ENCODE measurements at regions of chr19 and their contacts with region 1.

Region 1: DNA sequence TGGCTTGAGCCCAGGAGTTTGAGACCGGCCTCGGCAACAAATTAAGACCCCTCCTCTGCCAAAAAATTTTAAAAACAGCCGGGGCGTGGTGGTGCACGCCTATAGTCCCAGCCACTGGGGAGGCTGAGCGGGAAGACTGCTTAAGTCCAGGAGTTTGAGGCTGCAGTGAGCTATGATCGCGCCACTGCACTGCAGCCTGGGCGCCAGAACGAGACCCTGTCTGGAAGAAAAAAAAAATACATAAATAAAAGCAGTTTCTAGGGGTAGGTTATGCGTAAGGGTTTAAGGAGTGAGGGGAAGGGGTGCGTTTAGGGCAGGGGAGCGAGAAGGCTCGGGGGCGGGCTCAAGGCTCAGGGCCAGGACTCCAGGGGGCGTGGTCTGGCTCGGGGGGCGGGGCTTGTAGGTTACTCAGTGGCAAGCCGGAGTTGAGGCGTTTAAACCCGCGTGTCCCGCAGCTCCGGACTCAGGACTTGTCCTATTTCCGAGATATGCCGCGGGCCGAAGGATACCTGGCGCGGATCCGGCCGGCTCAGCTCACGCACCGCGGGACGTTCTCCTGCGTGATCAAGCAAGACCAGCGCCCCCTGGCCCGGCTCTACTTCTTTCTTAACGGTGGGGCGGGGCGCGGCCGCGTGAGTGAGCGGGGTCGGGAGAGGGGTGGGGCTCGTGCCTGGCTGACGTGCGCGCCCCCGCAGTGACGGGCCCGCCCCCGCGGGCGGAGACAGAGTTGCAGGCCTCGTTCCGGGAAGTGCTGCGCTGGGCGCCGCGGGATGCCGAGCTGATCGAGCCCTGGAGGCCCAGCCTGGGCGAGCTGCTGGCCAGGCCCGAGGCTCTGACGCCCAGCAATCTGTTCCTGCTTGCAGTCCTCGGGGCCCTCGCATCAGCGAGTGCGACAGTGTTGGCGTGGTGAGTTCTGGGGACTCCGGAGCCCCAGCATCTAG is 10.7 kb downstream of the SPACA6 start:
- DNase-seq: peak; percentile 89
- H3K4me3 ChIP-seq: peak overlapping the region; percentile 76 to 88 (median 82)
- H3K27ac ChIP-seq: peak overlapping the region; percentile 56
- H3K4me1 ChIP-seq: peaks cover 23% of the 10 kb centered on the region
- H3K27me3 ChIP-seq: no peaks in the 10 kb centered on the region
- CTCF ChIP-seq: peak in 1 of 2 donors; percentile 58

Region 2: DNA sequence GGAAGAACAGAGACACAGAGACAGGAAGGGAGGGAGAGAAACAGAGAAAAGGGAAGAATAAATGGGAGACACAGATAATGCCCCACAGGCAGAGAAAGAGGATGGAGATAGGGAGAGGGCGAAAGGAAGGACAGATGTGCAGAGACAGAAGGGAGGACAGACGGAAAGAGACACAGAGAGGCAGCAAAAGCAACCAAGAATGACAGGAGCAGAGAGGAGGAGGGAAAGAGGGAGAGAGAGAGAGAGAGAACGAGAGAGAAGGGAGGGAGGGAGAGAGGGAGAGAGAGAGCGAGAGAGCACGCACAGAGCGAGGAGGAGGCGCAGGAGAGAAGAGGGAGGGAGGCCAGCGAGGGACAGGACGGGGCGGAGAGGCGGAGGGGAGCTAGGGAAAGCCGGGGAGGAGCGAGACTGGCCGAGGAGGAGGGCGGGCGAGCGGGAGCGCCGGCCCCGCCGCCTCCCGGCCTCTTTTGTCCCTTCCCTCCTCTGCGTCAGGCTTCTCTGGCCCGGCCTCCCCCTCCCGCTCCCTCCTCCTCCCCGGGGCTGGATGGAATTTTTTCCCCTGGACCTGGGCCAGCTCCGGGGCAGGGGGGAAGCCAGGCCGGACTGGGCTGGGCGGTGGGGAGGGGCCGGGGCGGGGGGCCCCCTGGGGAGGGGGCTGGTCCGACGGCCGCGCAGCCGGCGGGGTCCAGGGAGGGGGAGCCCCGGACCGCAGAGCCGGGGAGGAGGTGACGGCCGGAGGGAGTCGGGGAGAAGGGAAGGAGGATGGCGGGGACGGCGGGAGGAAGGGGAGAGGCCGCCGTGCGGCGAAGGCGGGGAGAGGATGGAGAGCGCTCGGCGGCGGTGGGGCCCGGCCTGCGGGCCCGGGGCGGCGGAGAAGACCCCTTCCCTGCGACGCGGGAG is 14.9 kb before region 1 on chr19:
- CTCF ChIA-PET with region 1: interaction called, 9 read pairs
- dilution Hi-C with region 1: no loop called
- in situ Hi-C with region 1: no loop called
- intact Hi-C with region 1: loop called (anchors 1 kb)
- DNase-seq: peak; percentile 94
- H3K4me3 ChIP-seq: peak overlapping the region; percentile 80 to 94 (median 82)
- H3K27ac ChIP-seq: peak overlapping the region; percentile 58
- H3K4me1 ChIP-seq: peaks cover 25% of the 10 kb centered on the region
- H3K27me3 ChIP-seq: no peaks in the 10 kb centered on the region
- CTCF ChIP-seq: no peak

Region 3: DNA sequence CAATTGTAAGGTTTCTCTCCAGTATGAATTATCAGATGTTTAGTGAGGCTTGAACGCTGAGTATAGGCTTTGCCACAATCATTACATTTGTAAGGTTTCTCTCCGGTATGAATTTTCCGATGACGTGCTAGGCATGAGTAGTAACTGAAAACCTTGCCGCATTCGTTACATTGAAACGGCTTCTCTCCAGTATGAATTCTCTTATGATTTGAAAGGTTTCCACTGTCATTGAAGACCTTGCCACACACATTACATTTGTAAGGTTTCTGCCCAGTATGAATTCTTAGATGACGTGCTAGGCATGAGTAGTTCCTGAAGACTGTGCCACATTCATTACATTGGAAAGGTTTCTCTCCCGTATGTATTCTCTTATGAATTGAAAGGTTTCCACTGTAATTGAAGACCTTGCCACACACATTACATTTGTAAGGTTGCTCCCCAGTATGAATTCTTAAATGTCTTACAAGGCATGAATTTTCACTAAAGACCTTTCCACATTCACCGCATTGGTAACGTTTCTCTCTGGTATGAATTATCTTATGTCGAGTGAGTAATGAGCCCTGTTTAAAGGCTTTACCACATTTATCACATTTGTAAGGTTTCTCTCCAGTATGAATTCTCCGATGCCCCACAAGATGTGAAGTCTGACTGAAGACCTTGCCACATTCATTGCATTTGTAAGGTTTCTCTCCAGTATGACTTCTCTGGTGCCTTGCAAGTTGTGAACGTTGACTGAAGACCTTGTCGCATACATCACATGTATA is 451.9 kb after region 1 on chr19:
- CTCF ChIA-PET with region 1: no interaction called
- dilution Hi-C with region 1: no loop called
- in situ Hi-C with region 1: no loop called
- intact Hi-C with region 1: no loop called
- DNase-seq: no peak
- H3K4me3 ChIP-seq: no peak overlapping the region
- H3K27ac ChIP-seq: no peak overlapping the region
- H3K4me1 ChIP-seq: no peaks in the 10 kb centered on the region
- H3K27me3 ChIP-seq: no peaks in the 10 kb centered on the region
- CTCF ChIP-seq: no peak

Measured in mammary epithelial cell (primary cell).